OCI-LY7 (cell line): ENCODE measurements at regions of chr5 and their contacts with region 1.

Region 1: GRCh38 chr5:132064738-132065331 is 4.4 kb downstream of the IL3 start:
- DNase-seq: peak; percentile 80
- H3K4me3 ChIP-seq: no peak overlapping the region
- H3K27ac ChIP-seq: no peak overlapping the region
- H3K4me1 ChIP-seq: no peaks in the 10 kb centered on the region
- CTCF ChIP-seq: peak; percentile 87

Region 2: DNA sequence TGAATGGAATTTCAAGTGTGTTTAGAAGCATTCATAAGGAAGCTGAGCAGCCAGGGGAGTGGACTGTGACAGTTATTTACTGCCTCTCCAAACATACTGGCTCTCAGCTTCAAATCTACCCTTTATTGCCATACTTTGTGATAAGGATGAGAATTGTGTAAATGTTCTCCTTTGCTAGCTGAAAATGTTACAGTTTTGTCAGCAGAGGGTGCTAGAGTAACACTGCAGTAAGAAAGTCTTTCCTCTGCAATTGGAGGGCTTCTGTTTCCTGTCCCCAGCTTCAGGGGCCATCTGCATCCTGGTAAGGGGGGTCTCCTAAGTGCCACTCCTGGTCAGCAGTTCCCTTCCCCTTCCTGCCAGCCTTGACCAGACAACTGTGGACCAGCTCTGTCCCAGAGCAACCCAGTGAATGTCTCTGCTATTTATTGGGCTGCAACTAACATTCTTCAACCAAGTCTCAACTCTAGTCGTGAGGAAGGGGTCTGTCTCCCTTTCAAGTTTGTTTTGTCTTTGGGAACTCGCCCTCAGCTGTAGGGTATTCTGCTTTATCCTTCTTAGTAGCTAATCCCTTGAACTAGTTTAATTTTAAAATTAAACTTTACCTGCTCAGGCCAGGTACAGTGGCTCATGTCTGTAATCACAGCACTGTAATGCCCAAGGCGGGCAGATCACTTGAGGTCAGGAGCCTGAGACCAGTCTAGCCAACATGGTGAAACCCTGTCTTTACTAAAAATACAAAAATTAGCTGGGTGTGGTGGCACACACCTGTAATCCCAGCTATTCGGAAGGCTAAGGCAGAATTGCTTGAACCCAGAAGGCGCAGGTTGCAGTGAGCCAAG is 475.1 kb before region 1 on chr5:
- CTCF ChIA-PET with region 1: no interaction called
- POLR2A ChIA-PET with region 1: no interaction called
- intact Hi-C with region 1: loop called (anchors 1 kb)
- DNase-seq: peak; percentile 71
- H3K4me3 ChIP-seq: no peak overlapping the region
- H3K27ac ChIP-seq: no peak overlapping the region
- H3K4me1 ChIP-seq: peaks cover 3% of the 10 kb centered on the region
- CTCF ChIP-seq: peak; percentile 96

Region 3: GRCh38 chr5:132103332-132103951 is 38.6 kb after region 1 on chr5:
- CTCF ChIA-PET with region 1: no interaction called
- POLR2A ChIA-PET with region 1: no interaction called
- intact Hi-C with region 1: loop called (anchors 2 kb)
- DNase-seq: peak; percentile 89
- H3K4me3 ChIP-seq: peak overlapping the region; percentile 44
- H3K27ac ChIP-seq: peak overlapping the region; percentile 75
- H3K4me1 ChIP-seq: peaks cover 66% of the 10 kb centered on the region
- CTCF ChIP-seq: peak; percentile 41; the same call in 1 of the 2 replicates

Region 4: DNA sequence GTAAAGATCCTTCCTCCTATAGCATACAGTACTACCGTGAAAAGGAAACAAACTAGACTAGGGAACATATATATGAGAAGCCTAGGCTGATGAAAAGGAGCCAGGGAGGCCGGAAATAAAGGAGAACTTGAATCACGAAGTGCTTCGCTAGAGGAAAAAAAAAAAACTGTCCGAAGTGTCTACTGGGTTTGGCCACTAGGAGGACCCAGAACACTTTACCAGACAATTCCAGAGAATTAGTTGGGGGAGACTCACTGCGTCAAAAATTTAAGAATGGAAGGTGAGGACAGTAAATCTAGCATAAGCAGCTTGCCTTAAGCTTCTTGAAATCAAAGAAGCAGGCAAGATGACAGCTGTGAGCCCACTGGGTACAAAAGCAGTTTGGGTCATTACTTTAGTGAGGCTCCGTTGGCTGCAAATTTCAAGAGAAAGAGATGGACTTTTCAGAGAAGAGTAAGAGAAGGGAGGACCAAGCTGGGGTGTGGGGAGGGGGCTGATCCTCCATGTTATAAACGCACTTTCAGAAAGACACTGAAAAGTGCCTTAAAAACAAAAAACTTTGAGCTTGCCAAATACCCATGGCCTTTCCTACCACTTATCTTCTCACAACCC is 115.4 kb after region 1 on chr5:
- CTCF ChIA-PET with region 1: no interaction called
- POLR2A ChIA-PET with region 1: no interaction called
- intact Hi-C with region 1: loop called (anchors 1 kb)
- DNase-seq: peak; percentile 75
- H3K4me3 ChIP-seq: no peak overlapping the region
- H3K27ac ChIP-seq: no peak overlapping the region
- H3K4me1 ChIP-seq: peaks cover 43% of the 10 kb centered on the region
- CTCF ChIP-seq: peak; percentile 95

Region 5: DNA sequence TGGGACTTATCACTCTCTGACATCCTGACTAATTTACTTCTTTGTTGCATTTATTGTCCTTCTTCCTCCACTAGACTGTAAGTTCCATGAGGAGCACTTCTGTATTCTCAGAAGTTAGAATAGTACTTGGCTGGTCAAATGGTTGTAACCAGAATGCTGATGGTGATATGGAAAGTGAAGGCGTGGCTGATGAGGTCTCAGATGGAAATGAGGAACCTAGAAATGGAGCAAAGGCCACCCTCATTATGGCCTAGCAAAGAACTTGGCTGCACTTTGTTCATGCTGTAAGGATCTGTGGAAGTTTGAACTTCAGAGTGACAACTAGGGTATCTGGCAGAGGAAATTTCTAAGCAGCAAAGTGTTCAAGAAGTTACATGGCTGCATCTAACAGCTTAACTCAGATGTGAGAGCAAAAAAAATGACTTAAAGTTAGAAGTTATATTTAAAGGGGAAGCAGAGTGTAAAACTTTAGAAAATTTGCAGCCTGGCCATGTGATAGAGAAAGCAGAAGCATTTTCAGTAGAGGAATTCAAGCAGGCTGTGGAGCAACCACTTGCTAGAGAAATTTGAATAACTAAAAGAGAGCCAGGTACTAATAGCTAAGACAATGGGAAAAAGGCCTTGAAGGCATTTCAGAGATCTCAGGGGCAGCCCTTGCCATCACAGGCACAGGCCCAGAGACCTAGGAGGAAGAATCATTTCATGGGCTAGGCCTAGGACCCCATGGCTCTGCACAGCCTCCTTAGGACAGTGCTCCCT is 289.7 kb after region 1 on chr5:
- CTCF ChIA-PET with region 1: no interaction called
- POLR2A ChIA-PET with region 1: no interaction called
- intact Hi-C with region 1: loop called (anchors 10 kb)
- DNase-seq: no peak
- H3K4me3 ChIP-seq: no peak overlapping the region
- H3K27ac ChIP-seq: no peak overlapping the region
- H3K4me1 ChIP-seq: peaks cover 15% of the 10 kb centered on the region
- CTCF ChIP-seq: no peak

Region 6: GRCh38 chr5:132674671-132675506 is 610.1 kb after region 1 on chr5:
- CTCF ChIA-PET with region 1: no interaction called
- POLR2A ChIA-PET with region 1: no interaction called
- intact Hi-C with region 1: no loop called
- DNase-seq: no peak
- H3K4me3 ChIP-seq: no peak overlapping the region
- H3K27ac ChIP-seq: no peak overlapping the region
- H3K4me1 ChIP-seq: no peaks in the 10 kb centered on the region
- CTCF ChIP-seq: no peak